ENCODE measurements at regions of chr11 and their contacts with region 1.

Region 1: DNA sequence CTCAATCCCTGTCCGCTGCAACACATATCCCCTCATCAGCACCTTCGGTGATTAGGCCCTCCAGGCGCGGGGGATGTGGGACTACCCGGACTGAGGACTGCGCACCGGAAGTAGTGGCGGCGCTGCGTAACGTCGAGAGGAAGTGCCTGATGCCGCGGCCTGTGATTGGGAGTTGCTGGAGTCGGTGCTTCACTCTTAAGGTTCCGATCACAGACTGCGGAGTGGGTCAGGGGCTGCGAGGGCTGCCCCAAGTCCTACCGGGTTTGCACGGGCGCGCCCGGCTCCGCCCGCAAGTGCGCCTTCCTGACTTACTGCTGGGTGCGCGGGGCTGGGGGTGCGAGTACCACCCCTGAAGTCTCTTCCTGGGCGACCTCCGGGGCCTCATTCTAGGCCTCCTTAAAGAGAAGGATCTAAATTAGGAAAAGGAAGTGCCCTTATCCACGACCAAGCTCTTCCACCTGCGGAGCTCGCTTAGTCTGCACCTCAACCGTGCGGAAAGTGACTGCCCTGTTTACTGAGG is at the start of gene ALKBH3:
- DNase-seq: peak; percentile 86
- ATAC-seq: peak; percentile 100
- H3K4me3 ChIP-seq: peak within 1 kb of the TSS; percentile 91 to 93 (median 92)
- H3K27ac ChIP-seq: peak within 1 kb of the TSS; percentile 55
- H3K4me1 ChIP-seq: peaks cover 16% of the 10 kb centered on the region
- H3K27me3 ChIP-seq: peaks cover 0 to 6% of the 10 kb centered on the region in 2 experiments; a peak in 1 of 5 replicates
- CTCF ChIP-seq: no peak
- EP300 ChIP-seq: peak in 1 of 2 experiments; percentile 49; a peak in 2 of 4 replicates
- POLR2A ChIP-seq: peak; percentile 48 to 55; a peak in 3 of 4 replicates
- RAD21 ChIP-seq: peak; percentile 66
- total RNA-seq, gene ALKBH3: 36.1 and 49.6 TPM in 2 replicates

Region 2: DNA sequence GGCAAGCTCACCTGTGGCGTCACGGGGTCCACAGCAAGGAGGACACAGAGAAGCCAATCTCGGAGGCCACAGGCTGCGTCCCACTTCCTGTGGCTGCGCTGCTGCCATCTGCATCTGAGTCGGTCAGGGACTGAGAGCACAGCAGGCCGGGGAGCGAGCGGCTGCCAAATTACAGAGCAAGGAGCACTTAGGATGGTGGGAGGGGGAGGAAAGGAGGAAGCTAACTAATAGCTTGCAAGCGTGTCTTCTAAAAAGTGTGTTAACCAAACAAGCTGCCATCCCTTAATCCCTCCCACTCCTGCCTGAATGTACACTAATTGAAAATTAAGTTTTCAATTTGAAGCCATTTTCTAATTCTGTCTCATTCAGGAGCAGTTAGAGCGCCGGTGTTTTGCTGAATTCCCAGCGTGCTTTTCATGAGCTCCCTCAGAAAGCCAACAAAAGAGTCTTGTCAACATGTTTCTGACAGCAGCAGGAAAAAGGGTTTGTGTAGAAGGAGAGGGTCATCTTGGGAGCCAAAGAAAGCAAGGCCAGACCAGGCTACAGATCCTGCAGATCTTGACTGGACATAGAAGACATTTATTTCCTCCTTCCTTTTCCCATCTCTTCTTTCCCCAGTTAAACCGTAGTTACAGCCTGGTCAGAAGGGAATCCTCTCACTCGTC is 611.3 kb before region 1 on chr11:
- CTCF ChIA-PET with region 1: no interaction called
- POLR2A ChIA-PET with region 1: no interaction called
- in situ Hi-C with region 1: no loop called
- intact Hi-C with region 1: no loop called
- DNase-seq: no peak
- ATAC-seq: no peak; the same call in 2 of the 3 replicates
- H3K4me3 ChIP-seq: no peak overlapping the region
- H3K27ac ChIP-seq: no peak overlapping the region
- H3K4me1 ChIP-seq: no peaks in the 10 kb centered on the region
- H3K27me3 ChIP-seq: peaks cover 2 to 14% of the 10 kb centered on the region in 2 experiments; a peak in 4 of 5 replicates
- CTCF ChIP-seq: no peak
- EP300 ChIP-seq: no peak
- POLR2A ChIP-seq: no peak
- RAD21 ChIP-seq: no peak

Region 3: DNA sequence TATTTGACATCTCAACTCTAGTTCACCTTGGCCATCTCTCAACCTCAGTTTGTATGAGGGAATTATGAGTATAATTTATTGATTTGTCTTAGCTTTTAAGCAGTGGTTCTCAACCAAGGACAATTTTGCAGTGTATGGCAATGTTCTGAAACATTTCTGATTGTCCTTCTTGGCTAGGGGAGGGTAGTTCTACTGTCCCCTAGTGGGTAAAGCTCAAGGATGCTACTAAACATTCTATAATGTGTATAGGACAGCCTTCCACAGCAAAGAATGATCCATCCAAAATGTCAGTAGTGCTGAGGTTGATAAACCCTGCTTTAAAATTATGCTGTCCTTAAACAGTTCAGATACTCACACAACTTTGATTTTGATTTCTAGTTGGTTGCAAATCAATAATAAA is 78.2 kb before region 1 on chr11:
- CTCF ChIA-PET with region 1: no interaction called
- POLR2A ChIA-PET with region 1: no interaction called
- in situ Hi-C with region 1: no loop called
- intact Hi-C with region 1: no loop called
- DNase-seq: peak; percentile 7
- ATAC-seq: peak; percentile 59
- H3K4me3 ChIP-seq: no peak overlapping the region
- H3K27ac ChIP-seq: no peak overlapping the region
- H3K4me1 ChIP-seq: no peaks in the 10 kb centered on the region
- H3K27me3 ChIP-seq: no peaks in the 10 kb centered on the region
- CTCF ChIP-seq: no peak
- EP300 ChIP-seq: no peak
- POLR2A ChIP-seq: no peak
- RAD21 ChIP-seq: no peak

Region 4: DNA sequence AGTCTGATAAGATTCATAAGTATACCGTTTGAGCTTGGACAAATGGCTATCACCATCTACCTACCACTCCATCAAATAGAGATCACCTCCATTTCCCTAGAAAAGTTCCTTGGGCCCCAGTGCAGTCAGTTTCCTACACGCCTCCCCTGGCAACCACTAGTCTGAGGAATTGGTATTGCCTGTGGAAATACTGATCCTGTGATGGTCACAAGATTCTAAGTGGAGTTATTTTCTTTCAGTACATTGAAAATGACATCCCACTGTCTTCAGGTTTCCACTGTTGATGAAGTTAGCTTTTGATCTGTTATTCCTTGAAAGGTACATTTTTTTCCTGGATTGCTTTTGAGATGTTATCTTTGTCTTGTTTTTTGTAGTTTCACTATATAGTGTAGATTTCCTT is 162.5 kb after region 1 on chr11:
- CTCF ChIA-PET with region 1: no interaction called
- POLR2A ChIA-PET with region 1: no interaction called
- in situ Hi-C with region 1: loop called (anchors 5 kb)
- intact Hi-C with region 1: no loop called
- DNase-seq: no peak
- ATAC-seq: no peak
- H3K4me3 ChIP-seq: no peak overlapping the region
- H3K27ac ChIP-seq: no peak overlapping the region
- H3K4me1 ChIP-seq: no peaks in the 10 kb centered on the region
- H3K27me3 ChIP-seq: 0 out of 5 replicates have a peak, but pooled peaks cover 0 to 3% of the 10 kb centered on the region in 2 experiments
- CTCF ChIP-seq: no peak
- EP300 ChIP-seq: no peak
- POLR2A ChIP-seq: no peak
- RAD21 ChIP-seq: no peak

Region 5: DNA sequence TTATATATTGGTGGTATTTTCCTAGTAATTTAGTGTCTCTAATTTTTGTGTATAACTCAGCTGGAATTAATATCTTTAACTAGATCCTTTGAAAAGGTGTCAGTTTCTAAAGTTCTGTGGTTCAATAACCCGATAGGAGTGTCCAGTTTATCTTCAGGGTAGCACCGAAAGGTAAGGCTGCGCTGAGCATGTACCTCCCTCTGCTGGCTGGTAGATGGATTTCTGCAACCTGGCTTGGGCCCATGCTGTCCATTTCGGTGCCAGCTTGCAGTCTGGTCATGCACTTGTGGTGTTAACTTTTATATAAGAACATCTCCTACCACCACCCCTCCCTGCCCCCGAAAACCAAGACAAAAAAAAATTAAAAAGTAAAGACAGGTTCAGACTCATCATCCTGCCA is 239.5 kb after region 1 on chr11:
- CTCF ChIA-PET with region 1: no interaction called
- POLR2A ChIA-PET with region 1: no interaction called
- in situ Hi-C with region 1: no loop called
- intact Hi-C with region 1: no loop called
- DNase-seq: no peak
- ATAC-seq: peak; percentile 77
- H3K4me3 ChIP-seq: no peak overlapping the region
- H3K27ac ChIP-seq: no peak overlapping the region
- H3K4me1 ChIP-seq: no peaks in the 10 kb centered on the region
- H3K27me3 ChIP-seq: no peaks in the 10 kb centered on the region
- CTCF ChIP-seq: 0 out of 2 replicates have a peak, but pooled peaks have one; percentile 27
- EP300 ChIP-seq: no peak
- POLR2A ChIP-seq: no peak
- RAD21 ChIP-seq: no peak

Measured in HepG2 (cell line).